ENCODE measurements at regions of chr9 and their contacts with region 1.

Region 1: GRCh38 chr9:19230356-19231125 is at the start of gene DENND4C:
- DNase-seq: peak; percentile 89
- CTCF ChIP-seq: peak; percentile 34

Region 2: DNA sequence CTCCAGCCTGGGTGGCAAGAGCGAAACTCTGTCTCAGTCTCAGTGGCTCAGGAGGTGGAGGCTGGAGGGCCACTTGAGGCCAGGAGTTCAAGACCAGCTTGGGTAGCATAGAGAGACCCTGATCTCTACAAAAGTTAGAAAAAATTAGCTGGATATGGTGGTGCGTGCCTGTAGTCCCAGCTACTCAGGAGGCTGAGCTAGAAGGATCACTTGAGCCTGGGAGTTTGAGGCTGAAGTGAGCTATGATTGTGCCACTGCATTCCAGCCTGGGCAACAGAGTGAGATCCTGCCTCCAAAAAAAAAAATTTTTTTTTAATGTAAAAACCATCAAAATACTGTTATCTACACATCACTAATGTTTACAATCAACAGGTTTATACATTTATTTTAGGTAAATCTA is 24.6 kb after region 1 on chr9:
- CTCF ChIA-PET with region 1: interaction called, 4 read pairs
- POLR2A ChIA-PET with region 1: interaction called, 10 read pairs
- DNase-seq: no peak
- CTCF ChIP-seq: no peak

Region 3: GRCh38 chr9:19431361-19432171 is 201.0 kb after region 1 on chr9:
- CTCF ChIA-PET with region 1: no interaction called
- POLR2A ChIA-PET with region 1: no interaction called
- DNase-seq: no peak
- CTCF ChIP-seq: no peak

Region 4: DNA sequence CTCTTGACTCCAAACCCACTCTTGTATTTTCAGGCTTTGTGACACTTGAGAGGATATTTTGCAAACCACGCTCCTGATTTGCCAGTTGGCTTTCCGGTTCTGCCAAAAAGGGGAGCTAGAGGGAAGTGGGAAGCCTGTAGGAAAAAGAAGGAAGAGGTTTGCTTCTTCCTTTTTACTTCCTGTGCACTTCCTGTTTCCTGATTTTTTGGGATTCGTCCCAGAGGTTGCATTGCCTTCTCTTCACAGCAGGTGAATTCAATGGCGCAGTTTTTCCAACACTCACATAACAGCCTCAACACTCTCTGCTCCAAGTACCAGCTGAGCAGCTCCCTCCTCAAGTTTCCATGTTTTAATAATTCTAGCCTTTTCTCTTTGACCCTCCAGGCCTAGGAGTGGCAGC is 510.6 kb after region 1 on chr9:
- CTCF ChIA-PET with region 1: no interaction called
- POLR2A ChIA-PET with region 1: no interaction called
- DNase-seq: no peak
- CTCF ChIP-seq: no peak

Measured in GM10248 (cell line).